ENCODE measurements at regions of chr15 and their contacts with region 1.

Region 1: DNA sequence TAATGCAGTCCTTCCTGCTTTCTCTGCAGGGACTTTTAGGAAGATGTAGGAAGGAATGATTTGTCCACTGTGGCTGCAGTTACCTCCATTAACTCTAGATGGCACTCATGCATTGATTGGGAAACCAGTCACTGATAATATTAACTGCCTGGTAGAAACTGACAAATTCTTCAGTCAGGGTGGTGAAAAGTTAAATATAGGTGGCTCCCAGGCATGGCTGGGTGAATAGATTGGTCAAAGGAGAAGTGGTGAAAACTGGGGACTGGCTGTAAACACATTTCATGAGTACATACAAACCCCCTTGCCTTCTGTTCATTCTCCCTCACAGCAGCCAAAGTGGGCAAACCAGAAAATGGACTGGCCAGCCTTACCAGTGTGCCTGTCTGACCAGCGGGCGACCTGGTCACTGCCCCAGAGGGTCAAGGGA is 333.4 kb downstream of the THSD4 start:
- DNase-seq: peak in 1 of 3 donors; percentile 67
- ATAC-seq: peak; percentile 57
- H3K4me3 ChIP-seq: no peak overlapping the region
- H3K4me1 ChIP-seq: peaks cover 4% of the 10 kb centered on the region
- CTCF ChIP-seq: peak; percentile 53

Region 2: GRCh38 chr15:71511796-71512681 is 63.3 kb after region 1 on chr15:
- intact Hi-C with region 1: no loop called
- DNase-seq: no peak
- ATAC-seq: peak; percentile 20
- H3K4me3 ChIP-seq: no peak overlapping the region
- H3K4me1 ChIP-seq: peaks cover 8% of the 10 kb centered on the region
- CTCF ChIP-seq: no peak

Region 3: DNA sequence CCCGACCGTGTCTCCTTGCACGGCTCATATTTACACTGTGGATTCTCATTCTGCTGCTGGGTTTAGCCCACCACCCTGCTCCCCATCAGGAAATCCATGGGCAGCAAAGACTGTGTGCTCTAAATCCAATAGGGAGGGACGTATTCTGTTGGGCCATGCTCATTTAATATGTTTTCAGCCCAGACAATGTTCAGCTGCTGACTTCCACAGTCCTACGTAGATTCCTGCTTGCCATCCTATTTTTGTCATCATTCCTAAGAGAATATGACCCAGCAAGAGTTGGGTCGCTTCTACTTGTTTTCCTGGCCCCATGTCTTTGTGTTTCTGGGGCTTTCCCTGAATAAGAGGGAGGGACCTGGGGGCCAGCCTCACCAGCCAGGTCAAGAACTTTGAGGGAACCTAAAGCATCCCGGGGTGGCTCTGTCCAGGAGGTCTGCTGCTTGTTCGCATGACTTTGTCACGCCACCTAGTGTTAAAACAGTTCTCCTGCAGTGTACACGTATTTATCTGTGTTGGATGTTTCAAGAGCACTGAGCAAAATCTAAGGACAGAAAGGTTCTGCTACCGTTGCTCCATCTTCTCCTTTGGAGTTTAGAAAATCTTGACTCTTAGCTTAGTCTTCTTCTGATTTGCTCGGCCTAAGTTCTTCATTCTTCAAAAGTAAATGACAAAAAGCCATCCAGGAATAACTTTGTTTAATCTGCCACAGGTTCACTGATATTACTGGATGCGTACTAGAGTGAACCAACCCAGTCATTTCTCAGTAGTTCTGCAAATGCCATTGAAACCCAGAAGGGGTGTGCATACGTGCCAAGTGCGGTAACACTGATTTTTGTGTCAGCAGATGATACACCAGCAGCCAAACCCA is 281.8 kb after region 1 on chr15:
- intact Hi-C with region 1: loop called in 1 of 2 experiments (anchors 5 kb)
- DNase-seq: peak in 1 of 3 donors; percentile 72
- ATAC-seq: peak; percentile 64
- H3K4me3 ChIP-seq: no peak overlapping the region
- H3K4me1 ChIP-seq: peaks cover 15% of the 10 kb centered on the region
- CTCF ChIP-seq: peak; percentile 57

Region 4: GRCh38 chr15:71743861-71744382 is 295.2 kb after region 1 on chr15:
- intact Hi-C with region 1: loop called in 1 of 2 experiments (anchors 5 kb)
- DNase-seq: peak in 1 of 3 donors; percentile 76
- ATAC-seq: no peak
- H3K4me3 ChIP-seq: no peak overlapping the region
- H3K4me1 ChIP-seq: peaks cover 23% of the 10 kb centered on the region
- CTCF ChIP-seq: peak; percentile 47

Region 5: GRCh38 chr15:71962537-71962936 is 513.8 kb after region 1 on chr15:
- intact Hi-C with region 1: no loop called
- DNase-seq: no peak
- ATAC-seq: no peak
- H3K4me3 ChIP-seq: no peak overlapping the region
- H3K4me1 ChIP-seq: no peaks in the 10 kb centered on the region
- CTCF ChIP-seq: no peak

Region 6: DNA sequence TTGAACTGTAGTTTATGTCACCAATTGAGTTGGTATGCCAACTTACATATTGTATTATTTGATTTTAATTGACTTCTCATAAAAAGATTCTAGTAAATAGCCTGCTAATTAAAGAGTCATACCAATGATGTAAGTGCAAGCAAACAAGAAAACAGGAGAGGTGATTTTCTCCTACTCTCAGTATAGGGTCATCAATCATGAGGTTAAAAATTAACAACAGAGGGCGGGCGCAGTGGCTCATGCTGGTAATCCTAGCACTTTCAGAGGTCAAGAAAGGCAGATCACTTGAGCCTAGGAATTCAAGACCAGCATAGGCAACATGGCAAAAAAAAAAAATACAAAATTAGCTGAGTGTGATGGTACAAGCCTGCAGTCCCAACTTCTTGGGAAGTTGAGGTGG is 560.5 kb after region 1 on chr15:
- intact Hi-C with region 1: no loop called
- DNase-seq: peak in 1 of 3 donors; percentile 64
- ATAC-seq: peak; percentile 60
- H3K4me3 ChIP-seq: no peak overlapping the region
- H3K4me1 ChIP-seq: no peaks in the 10 kb centered on the region
- CTCF ChIP-seq: no peak

Measured in mucosa of descending colon (tissue), 3 donors.